A673 (cell line): ENCODE measurements at regions of chr9 and their contacts with region 1.

Region 1: DNA sequence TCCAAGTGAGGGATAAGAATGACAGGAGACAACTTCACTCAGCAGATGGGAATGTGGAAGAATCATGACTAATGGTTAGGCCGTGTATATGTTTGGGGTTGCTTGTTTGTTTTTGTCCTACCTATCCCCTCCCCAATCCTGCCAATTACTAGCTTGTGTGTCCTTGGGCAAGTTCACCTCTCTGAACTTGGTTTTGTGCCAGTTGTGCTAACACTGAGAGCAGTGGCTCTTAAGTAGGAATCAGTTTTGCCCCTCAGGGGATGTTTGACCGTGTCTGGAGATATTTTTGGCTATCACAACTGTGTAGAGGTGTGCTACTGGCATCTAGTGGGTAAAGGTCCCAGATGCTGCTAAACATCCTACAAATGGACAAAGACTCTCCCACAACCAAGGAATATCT is 287.0 kb downstream of the DMRT2 start:
- DNase-seq: no peak
- H3K4me3 ChIP-seq: no peak overlapping the region
- H3K27ac ChIP-seq: no peak overlapping the region
- H3K4me1 ChIP-seq: no peaks in the 10 kb centered on the region
- H3K27me3 ChIP-seq: no peaks in the 10 kb centered on the region
- CTCF ChIP-seq: no peak

Region 2: DNA sequence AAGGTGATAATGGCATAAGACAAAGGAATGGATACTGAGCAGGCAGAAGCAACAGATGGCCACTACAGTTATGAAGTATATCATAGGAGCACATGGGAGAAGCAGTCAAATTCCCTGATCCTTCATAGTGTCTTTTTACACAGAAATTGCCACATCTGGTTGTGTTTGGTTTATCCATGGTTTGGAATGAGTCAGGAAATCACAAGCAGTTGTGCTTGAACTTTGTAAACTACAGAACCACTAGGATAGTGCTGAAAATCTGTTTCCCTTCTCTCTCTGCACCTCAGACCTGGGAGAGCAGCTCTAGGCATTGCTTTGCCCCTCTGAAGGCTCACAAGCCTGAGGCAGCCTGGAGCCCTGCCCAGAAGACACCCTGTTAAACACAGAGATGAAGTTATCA is 153.0 kb before region 1 on chr9:
- CTCF ChIA-PET with region 1: no interaction called
- POLR2A ChIA-PET with region 1: no interaction called
- intact Hi-C with region 1: no loop called
- DNase-seq: no peak
- H3K4me3 ChIP-seq: no peak overlapping the region
- H3K27ac ChIP-seq: no peak overlapping the region
- H3K4me1 ChIP-seq: no peaks in the 10 kb centered on the region
- H3K27me3 ChIP-seq: no peaks in the 10 kb centered on the region
- CTCF ChIP-seq: no peak

Region 3: GRCh38 chr9:1285514-1285913 is 51.6 kb before region 1 on chr9:
- CTCF ChIA-PET with region 1: no interaction called
- POLR2A ChIA-PET with region 1: no interaction called
- intact Hi-C with region 1: loop called (anchors 10 kb)
- DNase-seq: no peak
- H3K4me3 ChIP-seq: no peak overlapping the region
- H3K27ac ChIP-seq: no peak overlapping the region
- H3K4me1 ChIP-seq: no peaks in the 10 kb centered on the region
- H3K27me3 ChIP-seq: no peaks in the 10 kb centered on the region
- CTCF ChIP-seq: no peak

Region 4: DNA sequence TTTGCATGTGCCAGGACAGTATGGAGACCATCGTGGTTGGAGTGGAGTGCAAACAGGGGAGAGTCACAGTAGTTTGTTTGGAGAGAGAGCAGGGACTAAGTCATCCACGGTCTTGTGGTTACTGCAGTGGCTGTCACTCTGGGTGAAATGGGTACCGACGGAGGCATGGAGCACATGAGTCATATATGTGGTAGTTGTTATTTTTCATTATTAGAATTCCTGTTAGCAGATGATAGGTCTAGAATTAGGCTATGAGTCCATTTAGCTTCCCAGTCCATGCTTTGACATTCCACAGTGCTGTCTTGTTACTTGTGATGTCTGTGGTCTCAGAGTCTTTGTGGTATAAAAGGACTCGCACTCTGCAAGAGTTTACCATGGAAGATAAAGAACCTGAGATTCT is 16.9 kb after region 1 on chr9:
- CTCF ChIA-PET with region 1: no interaction called
- POLR2A ChIA-PET with region 1: no interaction called
- intact Hi-C with region 1: no loop called
- DNase-seq: no peak
- H3K4me3 ChIP-seq: no peak overlapping the region
- H3K27ac ChIP-seq: no peak overlapping the region
- H3K4me1 ChIP-seq: no peaks in the 10 kb centered on the region
- H3K27me3 ChIP-seq: no peaks in the 10 kb centered on the region
- CTCF ChIP-seq: no peak